ENCODE measurements at regions of chr10 and their contacts with region 1.

Region 1: DNA sequence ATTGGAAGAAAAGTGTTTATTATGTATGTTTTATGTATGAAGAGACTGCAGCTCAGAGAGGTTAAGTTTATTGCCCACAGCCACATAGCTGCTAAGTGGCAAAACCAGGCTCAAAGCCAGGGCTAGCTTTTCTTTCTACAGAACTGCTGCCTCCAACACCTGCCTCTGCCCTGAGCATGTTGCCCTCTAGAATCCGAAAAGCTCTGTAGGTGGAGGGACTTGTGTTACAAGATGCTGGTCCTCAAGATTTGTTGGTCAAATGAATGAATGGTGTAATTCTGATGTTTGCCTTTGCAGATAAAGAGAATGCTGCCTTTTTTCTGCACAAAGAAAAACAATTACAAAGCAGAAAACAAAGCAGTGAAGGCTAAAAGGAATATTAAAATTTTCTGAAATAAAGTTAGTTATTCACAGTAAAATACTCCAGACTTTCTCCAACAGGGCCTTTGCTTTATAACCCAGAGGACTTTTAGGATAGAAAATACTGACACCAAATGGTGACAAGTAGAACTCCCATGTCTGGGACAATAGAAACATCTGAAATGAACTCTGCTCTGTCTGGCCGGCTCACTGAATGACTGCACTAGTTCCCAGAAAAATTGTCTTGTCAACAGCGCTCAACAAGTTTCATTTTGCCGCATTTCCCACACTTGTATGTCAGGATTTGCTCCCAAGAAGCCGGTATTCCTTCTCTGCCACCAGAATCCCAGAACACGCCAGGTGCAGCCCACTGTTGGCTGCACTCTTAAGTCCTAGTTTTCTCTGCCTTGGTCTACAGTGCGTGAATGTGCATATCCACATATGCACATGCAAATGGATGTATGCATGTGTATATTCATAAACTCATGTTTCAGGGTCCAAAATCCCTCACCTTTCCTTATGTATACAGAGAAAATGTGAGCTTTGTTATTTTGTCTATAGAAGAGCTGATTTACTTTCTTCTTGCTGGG is 11.0 kb upstream of the DNTT start:
- DNase-seq: no peak
- ATAC-seq: peak; percentile 95

Region 2: GRCh38 chr10:96017191-96017687 is 276.0 kb before region 1 on chr10:
- intact Hi-C with region 1: loop called in 1 of 2 experiments (anchors 5 kb)
- DNase-seq: peak in 1 of 2 donors; percentile 11
- ATAC-seq: peak; percentile 95

Region 3: GRCh38 chr10:96229568-96230030 is 63.6 kb before region 1 on chr10:
- intact Hi-C with region 1: loop called (anchors 5 to 10 kb)
- DNase-seq: peak; percentile 74 to 89
- ATAC-seq: peak; percentile 81

Region 4: DNA sequence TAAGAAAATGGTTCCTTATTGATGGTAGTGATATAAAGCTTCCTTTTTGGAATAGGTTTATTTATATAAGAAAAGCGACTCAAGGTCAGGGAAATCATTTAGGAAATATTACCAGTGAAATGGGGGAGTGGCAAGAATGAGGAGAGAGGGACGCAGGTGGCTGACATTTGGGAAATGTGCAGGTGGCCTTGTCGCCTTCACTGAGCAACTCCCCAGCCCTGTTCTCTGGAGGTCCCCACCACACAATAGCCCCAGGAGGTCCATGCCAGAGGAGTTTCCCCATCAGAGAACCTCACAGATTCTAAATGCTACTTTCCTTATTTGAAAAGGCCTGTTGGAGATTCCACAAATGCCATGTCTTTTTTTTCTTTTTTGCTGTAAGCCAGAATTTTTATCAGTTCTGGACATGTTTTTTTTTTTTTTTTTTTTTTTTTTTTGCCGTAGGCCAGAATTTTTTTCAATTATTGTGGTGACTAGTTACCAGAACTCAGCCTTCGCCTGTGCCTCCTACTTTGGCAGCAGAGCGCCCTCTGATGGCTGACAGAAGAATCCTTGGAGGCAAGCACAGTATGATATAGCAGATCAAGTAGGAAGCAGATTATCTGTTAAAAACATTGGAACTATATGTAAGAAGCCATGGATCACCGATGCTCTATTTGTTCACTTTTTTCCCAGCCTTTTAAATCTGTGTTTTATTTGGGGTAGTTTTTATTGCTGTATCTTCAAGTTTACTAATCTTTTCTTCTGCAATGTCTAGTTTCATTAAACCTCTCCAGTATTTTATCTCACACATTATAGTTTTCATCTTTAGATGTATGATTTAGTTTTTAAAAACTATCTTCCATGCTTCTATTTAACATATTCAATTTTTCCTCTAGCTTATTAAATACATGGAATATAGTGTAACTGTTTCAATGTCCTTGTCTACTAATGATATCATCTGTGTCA is 47.0 kb after region 1 on chr10:
- intact Hi-C with region 1: no loop called
- DNase-seq: peak; percentile 39 to 70
- ATAC-seq: peak; percentile 83